GM13977 (cell line): ENCODE measurements at regions of chr3 and their contacts with region 1.

Region 1: GRCh38 chr3:27479806-27480543 is 4.2 kb downstream of the SLC4A7 start:
- DNase-seq: no peak
- CTCF ChIP-seq: no peak

Region 2: GRCh38 chr3:27357665-27358258 is 122.2 kb before region 1 on chr3:
- in situ Hi-C with region 1: loop called (anchors 10 kb)
- DNase-seq: peak; percentile 32
- CTCF ChIP-seq: peak; percentile 81

Region 3: GRCh38 chr3:27533718-27534573 is 54.0 kb after region 1 on chr3:
- in situ Hi-C with region 1: no loop called
- DNase-seq: no peak
- CTCF ChIP-seq: no peak

Region 4: GRCh38 chr3:28036599-28037575 is 556.9 kb after region 1 on chr3:
- in situ Hi-C with region 1: no loop called
- DNase-seq: no peak
- CTCF ChIP-seq: no peak